Psoas muscle (tissue), 8 donors: ENCODE measurements at regions of chr3 and their contacts with region 1.

Region 1: DNA sequence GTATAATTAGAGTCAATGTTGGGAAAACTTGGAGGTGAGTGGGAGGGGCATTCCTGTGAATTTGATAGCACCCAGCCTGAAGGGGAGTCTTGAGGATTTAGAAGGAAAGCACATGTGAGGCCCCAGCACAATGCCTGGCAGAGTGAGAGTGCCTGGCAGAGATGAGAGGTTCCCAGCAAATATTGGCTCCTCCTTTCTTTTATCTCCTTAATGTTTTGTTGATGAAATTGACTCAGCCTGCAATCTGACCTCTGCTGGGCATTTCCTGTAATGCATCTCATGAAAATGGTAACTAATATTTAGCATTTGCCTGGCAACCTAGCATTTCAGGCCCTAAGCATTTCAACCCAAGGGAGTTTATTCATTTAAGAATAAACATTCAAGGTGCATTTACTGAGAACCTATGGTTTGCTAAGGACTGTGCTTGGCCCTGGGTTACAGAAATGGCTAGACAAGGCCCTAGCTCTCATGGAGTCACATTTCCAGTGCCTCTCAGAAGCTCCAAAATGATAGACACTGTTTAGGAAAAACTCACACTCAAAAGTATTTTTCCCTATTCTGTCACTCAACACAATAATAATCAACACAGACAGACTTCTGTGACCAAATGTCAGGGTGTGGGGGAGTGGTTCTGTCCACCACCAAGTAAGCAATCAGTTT is 19.0 kb downstream of the PDHB start:
- DNase-seq: peak in 1 of 2 donors; percentile 40
- ATAC-seq: peak; percentile 59 to 75 (median 68)
- H3K4me3 ChIP-seq: no peak overlapping the region
- H3K27ac ChIP-seq: no peak overlapping the region
- H3K4me1 ChIP-seq: no peaks in the 10 kb centered on the region
- H3K27me3 ChIP-seq: no peaks in the 10 kb centered on the region
- CTCF ChIP-seq: peak; percentile 78

Region 2: GRCh38 chr3:58177747-58178527 is 236.7 kb before region 1 on chr3:
- intact Hi-C with region 1: loop called (anchors 5 to 10 kb)
- DNase-seq: peak; percentile 90 to 95
- ATAC-seq: peak; percentile 93 to 99 (median 94)
- H3K4me3 ChIP-seq: peak overlapping the region; percentile 61
- H3K27ac ChIP-seq: no peak overlapping the region
- H3K4me1 ChIP-seq: peaks cover 3% of the 10 kb centered on the region
- H3K27me3 ChIP-seq: no peaks in the 10 kb centered on the region
- CTCF ChIP-seq: peak; percentile 94

Region 3: GRCh38 chr3:58188173-58188564 is 226.5 kb before region 1 on chr3:
- intact Hi-C with region 1: loop called in 1 of 2 experiments (anchors 10 kb)
- DNase-seq: no peak
- ATAC-seq: no peak
- H3K4me3 ChIP-seq: no peak overlapping the region
- H3K27ac ChIP-seq: no peak overlapping the region
- H3K4me1 ChIP-seq: no peaks in the 10 kb centered on the region
- H3K27me3 ChIP-seq: no peaks in the 10 kb centered on the region
- CTCF ChIP-seq: no peak

Region 4: GRCh38 chr3:58324391-58325390 is 90.0 kb before region 1 on chr3:
- intact Hi-C with region 1: loop called in 1 of 2 experiments (anchors 2 kb)
- DNase-seq: no peak
- ATAC-seq: no peak
- H3K4me3 ChIP-seq: no peak overlapping the region
- H3K27ac ChIP-seq: no peak overlapping the region
- H3K4me1 ChIP-seq: no peaks in the 10 kb centered on the region
- H3K27me3 ChIP-seq: no peaks in the 10 kb centered on the region
- CTCF ChIP-seq: no peak

Region 5: GRCh38 chr3:58332575-58333188 is 82.0 kb before region 1 on chr3 and contains the start of gene PXK:
- intact Hi-C with region 1: loop called in 1 of 2 experiments (anchors 5 kb)
- DNase-seq: peak; percentile 88 to 91
- ATAC-seq: peak; percentile 95 to 98 (median 96)
- H3K4me3 ChIP-seq: peak within 1 kb of the TSS; percentile 70
- H3K27ac ChIP-seq: peak within 1 kb of the TSS; percentile 43
- H3K4me1 ChIP-seq: peaks cover 26% of the 10 kb centered on the region
- H3K27me3 ChIP-seq: no peaks in the 10 kb centered on the region
- CTCF ChIP-seq: no peak
- total RNA-seq, gene PXK: 15.5 to 17.5 (median 16.5) TPM